Spleen (tissue), 13 donors: ENCODE measurements at regions of chr3 and their contacts with region 1.

Region 1: GRCh38 chr3:12663936-12664908 is at the start of gene RAF1:
- DNase-seq: peak; percentile 100
- H3K4me3 ChIP-seq: peak within 1 kb of the TSS; percentile 62 to 92 (median 80)
- H3K27ac ChIP-seq: peak within 1 kb of the TSS; percentile 95 to 100 (median 100)
- H3K4me1 ChIP-seq: peaks cover 20 to 45% (median 41%) of the 10 kb centered on the region in 6 donors
- H3K27me3 ChIP-seq: no peaks in the 10 kb centered on the region
- CTCF ChIP-seq: peak in 5 of 11 experiments; percentile 3 to 48 (median 48)
- POLR2A ChIP-seq: peak in 2 of 3 donors; percentile 11 to 73
- total RNA-seq, gene RAF1: 92.2 to 153 (median 115) TPM

Region 2: GRCh38 chr3:12345141-12345561 is 319.1 kb before region 1 on chr3:
- intact Hi-C with region 1: no loop called
- DNase-seq: no peak
- H3K4me3 ChIP-seq: no peak overlapping the region
- H3K27ac ChIP-seq: no peak overlapping the region
- H3K4me1 ChIP-seq: peaks cover 0 to 5% (median 3%) of the 10 kb centered on the region in 6 donors
- H3K27me3 ChIP-seq: no peaks in the 10 kb centered on the region
- CTCF ChIP-seq: no peak
- POLR2A ChIP-seq: no peak

Region 3: GRCh38 chr3:12556671-12557472 is 107.3 kb before region 1 on chr3 and contains the start of gene MKRN2:
- intact Hi-C with region 1: loop called (anchors 10 kb)
- DNase-seq: peak; percentile 98
- H3K4me3 ChIP-seq: peak within 1 kb of the TSS; percentile 65 to 93 (median 83)
- H3K27ac ChIP-seq: peak within 1 kb of the TSS; percentile 96 to 99 (median 97)
- H3K4me1 ChIP-seq: peaks cover 16 to 74% (median 57%) of the 10 kb centered on the region in 6 donors
- H3K27me3 ChIP-seq: peaks cover 0 to 43% (median 4%) of the 10 kb centered on the region in 7 donors
- CTCF ChIP-seq: no peak
- POLR2A ChIP-seq: peak; percentile 80 to 96 (median 94)
- total RNA-seq, gene MKRN2: 17.8 to 27.4 (median 21.3) TPM